ENCODE measurements at regions of chr4 and their contacts with region 1.

Region 1: DNA sequence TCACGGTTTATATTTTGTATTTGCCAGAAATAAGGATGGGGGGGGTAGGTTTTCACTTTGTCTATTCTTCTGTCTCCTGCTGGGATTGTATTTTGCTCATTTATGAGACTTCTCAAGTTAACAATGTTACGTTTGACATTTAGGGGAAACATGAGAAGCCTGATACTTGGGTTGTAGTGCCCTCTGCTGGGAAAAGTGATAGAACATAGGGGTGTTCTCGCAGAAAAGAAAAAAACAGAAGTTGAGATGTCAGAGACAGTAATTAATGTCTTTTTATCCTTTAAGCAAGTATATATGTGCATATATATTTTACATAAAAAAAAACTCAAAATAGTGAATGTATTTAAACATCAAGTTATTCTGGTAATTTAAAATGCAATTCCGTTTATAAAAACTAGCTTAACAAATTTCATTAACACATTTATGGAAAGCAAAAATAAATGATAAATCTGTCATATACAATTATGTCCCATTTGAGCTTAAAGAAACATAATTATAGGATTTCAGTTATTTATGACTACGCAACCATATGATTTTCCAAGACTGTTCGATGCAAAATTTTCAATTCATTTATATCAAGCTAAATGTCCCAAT is 46.0 kb upstream of the TMPRSS11F start:
- DNase-seq: no peak
- H3K4me3 ChIP-seq: no peak overlapping the region
- H3K27ac ChIP-seq: no peak overlapping the region
- H3K4me1 ChIP-seq: no peaks in the 10 kb centered on the region
- H3K27me3 ChIP-seq: no peaks in the 10 kb centered on the region
- CTCF ChIP-seq: peak in 1 of 4 experiments; percentile 29
- EP300 ChIP-seq: no peak
- POLR2A ChIP-seq: no peak

Region 2: GRCh38 chr4:67746797-67747495 is 428.7 kb before region 1 on chr4:
- intact Hi-C with region 1: loop called (anchors 10 kb)
- DNase-seq: no peak
- H3K4me3 ChIP-seq: no peak overlapping the region
- H3K27ac ChIP-seq: no peak overlapping the region
- H3K4me1 ChIP-seq: no peaks in the 10 kb centered on the region
- H3K27me3 ChIP-seq: no peaks in the 10 kb centered on the region
- CTCF ChIP-seq: peak in 3 of 4 experiments; percentile 11 to 58 (median 15)
- EP300 ChIP-seq: no peak
- POLR2A ChIP-seq: no peak

Measured in sigmoid colon (tissue), 7 donors.